Sciatic nerve (tissue), 2 donors: ENCODE measurements at regions of chr9 and their contacts with region 1.

Region 1: GRCh38 chr9:33878691-33879366 is 61.9 kb downstream of the UBE2R2 start:
- DNase-seq: no peak
- ATAC-seq: no peak

Region 2: DNA sequence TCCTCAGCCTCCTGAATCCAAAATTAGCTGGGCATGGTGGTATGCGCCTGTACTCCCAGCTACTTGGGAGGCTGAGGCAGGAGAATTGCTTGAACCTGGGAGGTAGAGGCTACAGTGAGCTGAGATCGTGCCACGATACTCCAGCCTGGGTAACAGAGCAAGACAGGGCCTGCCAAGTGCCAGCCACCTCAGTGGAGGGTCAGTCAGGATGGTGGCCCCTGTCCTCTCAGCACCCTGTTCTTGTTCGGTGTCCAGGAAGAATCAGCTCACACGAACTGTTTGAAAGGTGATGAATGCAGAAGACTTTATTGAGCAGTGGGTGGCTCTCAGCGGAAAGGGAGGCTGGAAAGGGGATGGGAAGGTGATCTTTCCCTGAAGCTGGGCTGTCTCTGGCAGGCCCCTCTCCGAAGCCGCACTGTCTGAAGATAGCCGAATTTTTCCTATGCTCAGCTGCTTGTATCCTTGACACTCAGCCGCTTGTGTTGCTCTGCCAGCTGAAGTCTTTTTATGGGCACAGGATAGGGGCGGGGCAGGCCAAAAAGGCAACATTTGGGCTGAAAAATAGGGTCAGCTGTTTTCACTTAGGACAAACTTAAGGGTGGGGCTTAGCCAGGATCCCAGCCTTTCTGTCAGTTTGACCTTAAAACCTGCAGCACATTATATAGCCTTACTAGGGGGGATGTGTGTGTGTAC is 10.9 kb before region 1 on chr9:
- intact Hi-C with region 1: loop called (anchors 2 kb)
- DNase-seq: peak; percentile 69
- ATAC-seq: peak; percentile 95

Region 3: GRCh38 chr9:33903157-33903780 is 24.4 kb after region 1 on chr9:
- intact Hi-C with region 1: no loop called
- DNase-seq: no peak
- ATAC-seq: no peak

Region 4: GRCh38 chr9:33919276-33919897 is 40.6 kb after region 1 on chr9:
- intact Hi-C with region 1: no loop called
- DNase-seq: no peak
- ATAC-seq: no peak

Region 5: DNA sequence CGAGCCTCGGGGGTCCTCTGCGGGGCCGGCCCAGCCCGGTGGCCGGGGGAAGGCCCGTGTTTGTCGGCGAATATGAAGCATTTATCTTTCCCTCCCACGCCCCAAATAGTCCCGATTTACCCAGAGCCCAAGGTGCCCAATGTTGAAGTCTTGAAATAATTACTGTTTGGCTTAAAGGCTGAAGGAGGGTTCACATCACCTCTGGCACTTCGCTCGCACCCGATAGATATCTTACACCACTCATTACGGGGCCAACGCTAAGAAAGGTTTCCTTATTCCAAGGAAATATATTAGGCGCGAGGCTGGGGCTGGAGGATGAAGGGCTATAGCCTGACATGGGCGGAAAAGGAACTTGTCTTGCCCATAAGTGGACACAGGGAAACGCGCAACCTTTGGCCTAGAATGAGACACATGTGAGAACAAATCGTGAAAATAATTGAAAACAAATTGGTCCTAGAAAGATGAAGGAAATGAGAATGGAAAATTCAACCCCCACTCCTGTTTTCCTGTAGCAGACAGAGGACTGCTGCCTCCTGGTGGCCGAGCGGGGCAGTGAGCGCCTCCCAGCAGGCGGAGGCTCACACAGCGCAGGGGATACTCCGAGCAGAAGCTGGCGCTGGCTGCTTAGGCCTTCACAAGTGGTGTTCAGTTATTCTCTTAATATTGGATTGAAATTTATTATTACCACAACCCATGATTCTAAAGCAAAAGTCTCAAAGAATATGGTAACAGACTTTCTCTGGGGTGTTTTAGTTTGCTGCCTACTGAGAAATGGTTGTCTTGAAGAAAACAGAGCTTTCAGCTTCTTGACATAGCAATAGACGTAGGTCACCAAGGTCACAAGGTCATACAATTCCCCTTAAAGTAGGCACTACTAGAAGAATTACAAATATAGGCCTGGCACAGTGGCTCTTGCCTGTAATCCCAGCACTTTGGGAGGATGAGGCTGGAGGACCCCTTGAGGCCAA is 823.2 kb after region 1 on chr9:
- intact Hi-C with region 1: no loop called
- DNase-seq: peak; percentile 94
- ATAC-seq: peak; percentile 95